Natural killer cell (primary cell): ENCODE measurements at regions of chr15 and their contacts with region 1.

Region 1: DNA sequence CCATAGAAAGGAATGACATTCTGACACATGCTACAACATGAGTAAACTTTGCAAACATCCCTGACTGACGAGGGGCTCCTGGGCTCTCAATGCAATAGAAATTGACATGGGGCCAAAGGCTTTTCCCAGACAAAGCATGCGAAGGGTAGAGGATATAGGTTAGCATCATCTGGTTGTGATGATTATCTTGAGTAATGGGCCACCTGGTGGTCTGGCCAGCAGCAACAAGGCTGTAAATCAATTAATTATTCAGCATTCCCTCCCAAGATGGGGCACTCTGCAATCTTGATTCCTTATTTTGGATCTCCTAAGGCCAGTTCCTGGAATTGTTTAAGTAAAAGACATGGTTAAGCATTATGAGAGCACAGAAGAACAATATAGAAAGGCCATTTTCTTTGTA is 99.2 kb downstream of the AGBL1 start:
- DNase-seq: peak in 1 of 2 donors; percentile 3
- ATAC-seq: no peak
- H3K4me3 ChIP-seq: no peak overlapping the region
- H3K4me3 Mint-ChIP-seq: no peak overlapping the region
- H3K27ac ChIP-seq: no peak overlapping the region
- H3K27ac Mint-ChIP-seq: no peak overlapping the region
- H3K4me1 ChIP-seq: no peaks in the 10 kb centered on the region
- H3K4me1 Mint-ChIP-seq: no peaks in the 10 kb centered on the region
- H3K27me3 ChIP-seq: no peaks in the 10 kb centered on the region
- H3K27me3 Mint-ChIP-seq: peaks cover 5 to 16% of the 10 kb centered on the region in 2 donors
- CTCF ChIP-seq: no peak

Region 2: DNA sequence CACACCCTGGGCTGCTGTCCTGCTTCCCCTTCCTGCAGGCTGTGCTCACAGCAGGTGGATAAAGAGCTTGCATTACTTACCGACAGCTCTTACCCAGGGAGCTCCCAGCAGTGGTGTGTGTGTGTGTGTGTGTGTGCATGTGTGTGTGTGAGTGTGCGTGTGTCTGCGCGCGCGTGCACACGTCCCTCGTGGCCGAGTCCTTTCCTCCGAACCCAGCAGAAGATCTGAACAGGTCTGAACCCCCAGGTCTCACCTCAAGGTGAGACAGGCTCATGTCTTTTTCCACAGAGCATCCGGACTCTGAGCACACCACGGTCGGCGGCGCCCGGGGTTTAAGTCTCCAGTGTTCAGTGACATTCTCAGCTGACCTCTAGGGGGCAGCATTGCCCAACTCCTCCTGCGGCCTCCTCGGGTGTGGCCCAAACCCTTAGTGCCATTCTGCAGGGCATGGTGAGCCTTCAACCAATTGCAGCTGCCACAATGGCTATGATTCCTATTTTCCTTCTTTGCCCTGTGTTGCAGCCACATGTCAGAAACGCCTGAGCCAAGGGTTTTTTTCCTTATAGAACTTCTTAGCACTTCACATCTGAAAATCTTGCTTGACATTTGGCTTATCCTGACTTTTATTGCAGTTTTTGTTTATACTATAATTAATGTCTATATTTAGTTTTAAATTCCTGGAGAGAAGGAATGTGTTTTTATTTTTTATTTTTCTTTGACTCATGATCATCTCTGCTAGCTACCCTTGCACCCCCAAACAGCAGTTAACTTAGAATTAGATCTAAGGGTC is 320.1 kb before region 1 on chr15:
- intact Hi-C with region 1: loop called (anchors 1 kb)
- DNase-seq: peak; percentile 63 to 86
- ATAC-seq: peak; percentile 83 to 90 (median 89)
- H3K4me3 ChIP-seq: no peak overlapping the region
- H3K4me3 Mint-ChIP-seq: peak overlapping the region; percentile 28
- H3K27ac ChIP-seq: no peak overlapping the region
- H3K27ac Mint-ChIP-seq: no peak overlapping the region
- H3K4me1 ChIP-seq: peaks cover 7% of the 10 kb centered on the region
- H3K4me1 Mint-ChIP-seq: peaks cover 5 to 6% of the 10 kb centered on the region in 2 donors
- H3K27me3 ChIP-seq: peaks cover 7% of the 10 kb centered on the region
- H3K27me3 Mint-ChIP-seq: peaks cover 12 to 29% of the 10 kb centered on the region in 2 donors
- CTCF ChIP-seq: peak; percentile 83

Region 3: GRCh38 chr15:86101818-86102217 is 77.0 kb before region 1 on chr15:
- intact Hi-C with region 1: no loop called
- DNase-seq: no peak
- ATAC-seq: no peak
- H3K4me3 ChIP-seq: no peak overlapping the region
- H3K4me3 Mint-ChIP-seq: no peak overlapping the region
- H3K27ac ChIP-seq: no peak overlapping the region
- H3K27ac Mint-ChIP-seq: no peak overlapping the region
- H3K4me1 ChIP-seq: no peaks in the 10 kb centered on the region
- H3K4me1 Mint-ChIP-seq: peaks cover 0 to 6% of the 10 kb centered on the region in 2 donors
- H3K27me3 ChIP-seq: peaks cover 4% of the 10 kb centered on the region
- H3K27me3 Mint-ChIP-seq: peaks cover 7 to 16% of the 10 kb centered on the region in 2 donors
- CTCF ChIP-seq: no peak

Region 4: GRCh38 chr15:86139828-86140227 is 39.0 kb before region 1 on chr15:
- intact Hi-C with region 1: no loop called
- DNase-seq: no peak
- ATAC-seq: no peak
- H3K4me3 ChIP-seq: no peak overlapping the region
- H3K4me3 Mint-ChIP-seq: no peak overlapping the region
- H3K27ac ChIP-seq: no peak overlapping the region
- H3K27ac Mint-ChIP-seq: no peak overlapping the region
- H3K4me1 ChIP-seq: no peaks in the 10 kb centered on the region
- H3K4me1 Mint-ChIP-seq: no peaks in the 10 kb centered on the region
- H3K27me3 ChIP-seq: no peaks in the 10 kb centered on the region
- H3K27me3 Mint-ChIP-seq: peaks cover 0 to 5% of the 10 kb centered on the region in 2 donors
- CTCF ChIP-seq: no peak